A549 (cell line): ENCODE measurements at regions of chr17 and their contacts with region 1.

Region 1: GRCh38 chr17:49880291-49881053 is 32.6 kb upstream of the TAC4 start:
- DNase-seq: peak; percentile 84 to 99
- ATAC-seq: peak; percentile 94 to 98
- H3K4me3 ChIP-seq: peak overlapping the region; percentile 32
- H3K27ac ChIP-seq: peak overlapping the region in 1 of 2 experiments; percentile 66; a peak in 3 of 6 replicates
- H3K4me1 ChIP-seq: peaks cover 5% of the 10 kb centered on the region; the same call in 1 of the 3 replicates
- CTCF ChIP-seq: peak; percentile 83
- EP300 ChIP-seq: no peak
- POLR2A ChIP-seq: no peak
- RAD21 ChIP-seq: peak; percentile 88 to 90

Region 2: GRCh38 chr17:49861150-49861892 is 19.2 kb before region 1 on chr17:
- CTCF ChIA-PET with region 1: interaction called, 194 read pairs
- POLR2A ChIA-PET with region 1: no interaction called
- DNase-seq: peak; percentile 66 to 82
- ATAC-seq: peak; percentile 42 to 65
- H3K4me3 ChIP-seq: no peak overlapping the region
- H3K27ac ChIP-seq: 0 out of 6 replicates have a peak overlapping the region, but pooled peaks of 1 of the 2 experiments have one; percentile 0
- H3K4me1 ChIP-seq: peaks cover 4% of the 10 kb centered on the region; the same call in 1 of the 3 replicates
- CTCF ChIP-seq: peak; percentile 98
- EP300 ChIP-seq: no peak
- POLR2A ChIP-seq: no peak
- RAD21 ChIP-seq: peak; percentile 99 to 100

Region 3: DNA sequence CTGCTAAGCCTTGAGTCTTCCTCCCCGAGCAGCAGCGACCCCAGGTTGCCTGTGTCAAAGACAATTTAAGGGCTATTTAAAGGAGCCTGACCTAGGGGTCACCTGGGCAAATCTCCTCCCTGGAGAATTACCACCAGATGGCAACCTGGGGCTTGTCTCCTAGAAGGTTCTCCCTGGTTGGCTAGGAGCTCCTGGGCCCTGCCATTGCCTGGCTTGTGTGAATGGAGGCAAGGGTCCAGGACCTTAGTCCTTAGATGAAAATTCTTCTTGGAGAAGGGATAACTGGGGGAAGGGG is 18.7 kb after region 1 on chr17:
- CTCF ChIA-PET with region 1: interaction called, 22 read pairs
- POLR2A ChIA-PET with region 1: no interaction called
- DNase-seq: peak; percentile 68 to 78
- ATAC-seq: peak; percentile 47 to 81; a peak in 4 of 6 replicates
- H3K4me3 ChIP-seq: no peak overlapping the region
- H3K27ac ChIP-seq: no peak overlapping the region
- H3K4me1 ChIP-seq: peaks cover 13% of the 10 kb centered on the region
- CTCF ChIP-seq: peak; percentile 52
- EP300 ChIP-seq: no peak
- POLR2A ChIP-seq: no peak
- RAD21 ChIP-seq: peak; percentile 60 to 73

Region 4: DNA sequence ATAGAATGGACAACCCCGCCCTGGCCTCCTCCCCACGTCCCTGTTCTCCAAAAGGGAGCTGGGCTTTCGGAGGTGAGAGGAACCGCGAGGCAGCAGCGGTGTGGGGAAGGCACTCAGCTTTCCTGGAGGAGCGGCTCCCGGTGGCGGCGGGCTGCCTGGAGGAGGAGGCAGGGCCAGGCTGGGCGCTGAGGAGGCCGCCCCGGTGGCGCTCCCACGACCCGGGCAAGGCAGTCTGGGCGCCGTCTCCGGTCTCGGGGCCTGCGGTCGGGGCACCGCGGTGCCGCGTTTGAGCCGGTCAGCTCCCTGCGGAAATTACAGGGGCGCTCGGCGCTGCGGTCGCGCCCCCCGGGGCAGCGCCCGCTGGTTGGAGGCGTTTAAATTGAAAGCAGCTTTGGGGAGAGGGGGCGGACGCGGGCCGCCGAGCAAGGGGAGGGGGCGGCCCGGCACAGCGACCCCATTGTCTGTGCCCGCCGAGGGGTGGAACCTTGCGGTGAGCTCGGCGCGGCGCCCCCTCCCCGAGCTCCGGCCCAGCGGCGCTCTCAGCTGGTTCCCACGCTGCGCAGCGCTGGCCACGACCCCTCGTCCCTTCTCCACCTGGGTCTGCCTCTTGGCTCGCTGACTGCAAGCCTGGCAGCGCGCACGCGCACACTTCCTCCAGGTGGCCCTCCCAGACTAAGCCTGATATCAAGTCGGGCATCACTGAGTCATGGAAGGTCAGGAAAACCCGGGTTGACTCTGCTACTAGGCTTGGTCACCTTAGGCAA is 29.8 kb after region 1 on chr17:
- CTCF ChIA-PET with region 1: interaction called, 17 read pairs
- POLR2A ChIA-PET with region 1: no interaction called
- DNase-seq: peak; percentile 39 to 55
- ATAC-seq: peak in 1 of 2 experiments; percentile 25; a peak in 2 of 6 replicates
- H3K4me3 ChIP-seq: peak overlapping the region; percentile 26; the same call in 2 of the 3 replicates
- H3K27ac ChIP-seq: peak overlapping the region in 1 of 2 experiments; percentile 63; a peak in 2 of 6 replicates
- H3K4me1 ChIP-seq: peaks cover 20% of the 10 kb centered on the region
- CTCF ChIP-seq: no peak
- EP300 ChIP-seq: no peak
- POLR2A ChIP-seq: no peak
- RAD21 ChIP-seq: no peak

Region 5: GRCh38 chr17:49926886-49927285 is 46.4 kb after region 1 on chr17:
- CTCF ChIA-PET with region 1: interaction called, 11 read pairs
- POLR2A ChIA-PET with region 1: no interaction called
- DNase-seq: peak in 1 of 2 experiments; percentile 30
- ATAC-seq: no peak
- H3K4me3 ChIP-seq: no peak overlapping the region
- H3K27ac ChIP-seq: no peak overlapping the region
- H3K4me1 ChIP-seq: peaks cover 10% of the 10 kb centered on the region
- CTCF ChIP-seq: no peak
- EP300 ChIP-seq: no peak
- POLR2A ChIP-seq: no peak
- RAD21 ChIP-seq: no peak

Region 6: GRCh38 chr17:49952209-49952911 is 71.9 kb after region 1 on chr17:
- CTCF ChIA-PET with region 1: interaction called, 25 read pairs
- POLR2A ChIA-PET with region 1: no interaction called
- DNase-seq: peak; percentile 85 to 98
- ATAC-seq: peak; percentile 94 to 98
- H3K4me3 ChIP-seq: no peak overlapping the region
- H3K27ac ChIP-seq: no peak overlapping the region
- H3K4me1 ChIP-seq: peaks cover 5% of the 10 kb centered on the region; the same call in 1 of the 3 replicates
- CTCF ChIP-seq: peak; percentile 91
- EP300 ChIP-seq: no peak
- POLR2A ChIP-seq: no peak
- RAD21 ChIP-seq: peak; percentile 74 to 85

Region 7: GRCh38 chr17:49959183-49959935 is 78.9 kb after region 1 on chr17:
- CTCF ChIA-PET with region 1: interaction called, 17 read pairs
- POLR2A ChIA-PET with region 1: no interaction called
- DNase-seq: peak in 1 of 2 experiments; percentile 27
- ATAC-seq: peak; percentile 11 to 38; a peak in 2 of 6 replicates
- H3K4me3 ChIP-seq: no peak overlapping the region
- H3K27ac ChIP-seq: no peak overlapping the region; a peak in 1 of 6 replicates
- H3K4me1 ChIP-seq: peaks cover 10% of the 10 kb centered on the region
- CTCF ChIP-seq: no peak
- EP300 ChIP-seq: no peak
- POLR2A ChIP-seq: no peak
- RAD21 ChIP-seq: no peak